Activated naive CD4-positive, alpha-beta T cell treated with anti-CD3 and anti-CD28 coated beads for 36 hours (primary cell): ENCODE measurements at regions of chr12 and their contacts with region 1.

Region 1: DNA sequence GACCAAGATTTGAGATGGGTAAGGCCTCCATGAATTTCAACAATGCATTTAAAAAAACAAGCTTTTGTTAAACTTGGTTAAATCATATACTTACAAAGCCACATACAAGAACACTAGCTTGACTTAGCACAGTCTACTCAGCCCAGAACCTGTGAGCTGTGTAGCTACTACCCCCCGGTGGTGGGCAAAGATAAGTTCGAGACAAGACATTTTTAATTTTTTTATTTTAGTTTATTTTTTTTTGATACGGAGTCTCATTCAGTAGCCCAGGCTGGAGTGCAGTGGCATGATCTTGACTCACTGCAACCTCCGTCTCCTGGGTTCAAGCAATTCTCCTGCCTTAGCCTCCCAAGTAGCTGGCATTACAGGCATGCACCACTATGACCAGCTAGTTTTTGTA is 3.7 kb upstream of the NECAP1 start:
- DNase-seq: peak; percentile 79
- H3K4me3 Mint-ChIP-seq: peak overlapping the region; percentile 25
- H3K27ac Mint-ChIP-seq: peak overlapping the region; percentile 26
- H3K4me1 Mint-ChIP-seq: peaks cover 41% of the 10 kb centered on the region
- H3K27me3 Mint-ChIP-seq: no peaks in the 10 kb centered on the region

Region 2: DNA sequence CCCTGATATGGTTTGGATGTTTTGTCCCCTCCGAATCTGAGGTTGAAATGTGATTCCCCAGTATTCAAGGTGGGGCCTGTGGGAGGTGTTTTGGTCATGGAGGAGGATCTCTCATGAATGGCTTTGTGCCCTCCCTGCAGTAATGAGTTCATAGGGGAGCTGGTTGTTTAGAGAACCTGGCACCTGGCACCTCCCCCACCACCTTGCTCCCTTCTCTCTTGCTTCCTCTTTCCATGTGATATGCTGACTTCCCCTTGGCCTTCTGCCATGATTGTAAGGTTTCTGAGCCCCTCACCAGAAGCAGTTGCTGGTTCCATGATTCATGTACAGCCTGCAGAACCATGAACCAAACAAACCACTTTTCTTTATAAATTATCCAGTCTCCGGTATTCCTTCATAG is 667.1 kb before region 1 on chr12:
- CTCF ChIA-PET with region 1: no interaction called
- intact Hi-C with region 1: no loop called
- DNase-seq: no peak
- H3K4me3 Mint-ChIP-seq: no peak overlapping the region
- H3K27ac Mint-ChIP-seq: no peak overlapping the region
- H3K4me1 Mint-ChIP-seq: no peaks in the 10 kb centered on the region
- H3K27me3 Mint-ChIP-seq: peaks cover 4% of the 10 kb centered on the region

Region 3: GRCh38 chr12:7638760-7639555 is 439.4 kb before region 1 on chr12:
- CTCF ChIA-PET with region 1: no interaction called
- intact Hi-C with region 1: loop called (anchors 2 kb)
- DNase-seq: peak; percentile 89
- H3K4me3 Mint-ChIP-seq: peak overlapping the region; percentile 65
- H3K27ac Mint-ChIP-seq: peak overlapping the region; percentile 69
- H3K4me1 Mint-ChIP-seq: peaks cover 20% of the 10 kb centered on the region
- H3K27me3 Mint-ChIP-seq: peaks cover 2% of the 10 kb centered on the region

Region 4: DNA sequence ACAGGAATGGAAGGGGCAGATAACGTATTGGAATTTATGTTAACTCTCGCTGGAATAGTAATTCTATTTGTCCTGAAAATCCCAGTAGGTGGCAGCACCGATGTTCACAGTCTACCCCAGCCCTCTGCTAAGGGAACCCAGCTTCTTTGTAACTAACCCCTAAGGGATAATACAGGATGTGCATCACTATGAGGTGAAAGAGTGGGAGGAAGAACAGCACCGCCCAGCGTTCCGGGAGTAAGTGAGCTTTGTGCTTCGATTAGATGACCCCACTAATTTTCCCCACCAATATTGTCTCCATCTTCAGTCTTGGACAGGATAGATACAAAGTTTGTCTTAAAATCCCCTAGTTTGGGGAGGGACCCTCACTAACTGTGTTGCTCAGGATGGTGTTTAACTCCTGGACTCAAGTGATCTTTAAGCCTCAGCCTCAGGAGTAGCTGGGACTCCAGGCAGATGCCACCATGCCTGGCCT is 145.1 kb before region 1 on chr12:
- CTCF ChIA-PET with region 1: interaction called, 4 read pairs
- intact Hi-C with region 1: loop called (anchors 1 kb)
- DNase-seq: peak; percentile 85
- H3K4me3 Mint-ChIP-seq: no peak overlapping the region
- H3K27ac Mint-ChIP-seq: no peak overlapping the region
- H3K4me1 Mint-ChIP-seq: peaks cover 38% of the 10 kb centered on the region
- H3K27me3 Mint-ChIP-seq: no peaks in the 10 kb centered on the region

Region 5: GRCh38 chr12:7995266-7995963 is 83.0 kb before region 1 on chr12:
- CTCF ChIA-PET with region 1: interaction called, 8 read pairs
- intact Hi-C with region 1: loop called (anchors 1 kb)
- DNase-seq: peak; percentile 95
- H3K4me3 Mint-ChIP-seq: no peak overlapping the region
- H3K27ac Mint-ChIP-seq: no peak overlapping the region
- H3K4me1 Mint-ChIP-seq: peaks cover 13% of the 10 kb centered on the region
- H3K27me3 Mint-ChIP-seq: no peaks in the 10 kb centered on the region

Region 6: DNA sequence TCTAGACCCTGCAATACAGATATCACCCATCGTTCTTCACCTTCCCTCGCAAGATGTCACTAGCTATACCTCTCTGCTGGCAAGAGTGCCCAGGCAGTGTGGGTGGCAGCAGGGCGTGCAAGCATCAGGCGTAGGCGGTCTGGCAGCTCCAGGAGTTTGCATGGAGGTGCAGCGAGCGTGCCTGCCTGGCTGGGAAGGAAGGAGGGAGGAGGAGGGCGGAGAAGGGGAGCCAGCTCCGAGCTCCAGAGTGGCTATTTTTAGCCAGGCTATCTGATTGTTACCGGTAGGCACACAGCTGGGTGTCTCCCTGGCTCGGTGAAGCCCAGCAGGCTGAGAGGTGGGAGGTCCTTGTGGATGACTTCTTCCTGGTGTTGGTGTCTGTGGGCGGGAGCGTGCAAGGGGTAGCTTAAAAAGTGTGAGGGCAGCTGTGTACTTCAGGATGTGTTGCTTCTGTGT is 39.7 kb before region 1 on chr12:
- CTCF ChIA-PET with region 1: interaction called, 205 read pairs
- intact Hi-C with region 1: no loop called
- DNase-seq: peak; percentile 57
- H3K4me3 Mint-ChIP-seq: peak overlapping the region; percentile 16
- H3K27ac Mint-ChIP-seq: no peak overlapping the region
- H3K4me1 Mint-ChIP-seq: peaks cover 55% of the 10 kb centered on the region
- H3K27me3 Mint-ChIP-seq: no peaks in the 10 kb centered on the region

Region 7: DNA sequence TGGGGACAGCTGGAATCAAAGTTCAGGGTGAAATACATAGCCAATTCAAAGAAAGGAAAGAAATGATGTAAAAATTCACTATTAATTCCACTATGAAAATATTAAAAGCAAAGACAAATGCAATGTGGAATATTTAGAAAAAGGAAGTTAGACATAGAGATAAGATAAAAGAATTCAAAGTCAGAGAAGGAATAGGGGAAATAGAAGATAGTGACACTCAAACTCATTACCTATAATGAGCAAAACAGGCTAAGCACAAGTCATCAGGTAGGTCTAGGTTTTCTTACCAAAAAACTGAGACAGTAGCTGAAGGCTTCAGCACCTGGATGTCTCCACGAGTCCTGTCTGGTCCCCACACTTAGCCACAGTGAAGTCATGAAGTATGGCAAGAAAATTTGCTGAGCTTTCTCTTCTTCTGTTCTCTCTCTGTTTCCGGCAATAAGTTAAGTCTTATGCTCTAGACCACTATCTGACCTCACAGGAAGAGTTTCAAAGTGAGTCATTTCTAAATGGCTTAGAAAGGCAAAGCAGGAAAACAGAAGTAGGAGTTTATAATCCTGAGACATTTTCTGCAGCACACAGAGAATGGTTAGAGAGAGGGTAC is 12.3 kb before region 1 on chr12 and contains the start of gene C3AR1:
- CTCF ChIA-PET with region 1: interaction called, 17 read pairs
- intact Hi-C with region 1: no loop called
- DNase-seq: peak; percentile 44
- H3K4me3 Mint-ChIP-seq: peak within 1 kb of the TSS; percentile 22
- H3K27ac Mint-ChIP-seq: peak within 1 kb of the TSS; percentile 63
- H3K4me1 Mint-ChIP-seq: peaks cover 26% of the 10 kb centered on the region
- H3K27me3 Mint-ChIP-seq: no peaks in the 10 kb centered on the region
- total RNA-seq, gene C3AR1: 0.21 to 0.25 TPM